PC-3 (cell line): ENCODE measurements at regions of chr22 and their contacts with region 1.

Region 1: GRCh38 chr22:37566903-37567820 is 6.9 kb downstream of the CDC42EP1 start:
- DNase-seq: peak; percentile 93
- ATAC-seq: peak; percentile 63
- H3K4me3 ChIP-seq: no peak overlapping the region
- H3K27ac ChIP-seq: peak overlapping the region; percentile 53
- H3K4me1 ChIP-seq: peaks cover 50% of the 10 kb centered on the region
- H3K27me3 ChIP-seq: no peaks in the 10 kb centered on the region
- CTCF ChIP-seq: peak; percentile 89

Region 2: GRCh38 chr22:37538590-37539357 is 28.4 kb before region 1 on chr22:
- CTCF ChIA-PET with region 1: interaction called, 8 read pairs
- POLR2A ChIA-PET with region 1: interaction called, 3 read pairs
- intact Hi-C with region 1: loop called (anchors 1 kb)
- DNase-seq: peak; percentile 89
- ATAC-seq: peak; percentile 89
- H3K4me3 ChIP-seq: peak overlapping the region; percentile 43; the same call in 1 of the 2 replicates
- H3K27ac ChIP-seq: no peak overlapping the region
- H3K4me1 ChIP-seq: peaks cover 22% of the 10 kb centered on the region
- H3K27me3 ChIP-seq: no peaks in the 10 kb centered on the region
- CTCF ChIP-seq: peak; percentile 90

Region 3: DNA sequence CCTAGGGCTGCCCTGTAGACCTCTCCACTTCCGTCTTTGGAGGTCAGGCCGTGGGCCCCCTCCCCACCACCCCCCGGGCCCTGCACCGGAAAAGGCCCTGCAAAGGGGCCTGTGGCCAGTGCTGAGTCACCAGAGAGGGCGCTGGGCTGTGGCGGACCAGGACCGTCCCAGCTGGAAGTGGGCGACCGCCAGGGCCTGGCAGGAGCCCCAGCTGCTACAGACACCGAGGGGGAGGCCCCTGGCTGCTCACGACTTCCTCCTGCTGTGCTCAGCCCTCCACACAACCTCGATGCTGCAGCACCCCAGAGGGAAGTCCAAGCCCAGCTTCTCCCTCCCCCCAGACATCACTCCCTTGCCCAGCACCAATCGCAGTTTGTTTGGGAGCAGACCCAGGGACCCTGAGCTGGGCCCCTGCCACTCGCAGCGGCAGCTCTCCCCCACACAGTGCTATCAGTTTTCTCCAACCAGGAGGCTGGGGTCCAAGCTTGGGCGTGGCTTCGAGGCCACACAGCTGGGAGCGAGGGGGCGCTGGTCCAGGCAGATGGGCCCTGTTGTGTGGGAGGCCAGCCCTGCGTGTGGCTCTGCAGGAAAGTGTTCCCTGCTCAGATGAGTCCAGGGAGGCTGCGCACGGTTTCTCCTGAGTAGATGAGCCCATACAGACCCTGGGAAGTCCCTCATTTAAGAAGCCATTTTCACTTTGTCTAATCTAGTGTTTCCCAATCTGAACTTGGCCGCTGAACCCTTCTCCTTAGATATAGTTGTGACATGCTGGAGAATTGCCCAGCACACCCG is 66.7 kb after region 1 on chr22:
- CTCF ChIA-PET with region 1: no interaction called
- POLR2A ChIA-PET with region 1: no interaction called
- intact Hi-C with region 1: no loop called
- DNase-seq: no peak
- ATAC-seq: peak; percentile 26; the same call in 1 of the 2 replicates
- H3K4me3 ChIP-seq: no peak overlapping the region
- H3K27ac ChIP-seq: no peak overlapping the region
- H3K4me1 ChIP-seq: peaks cover under 1% of the 10 kb centered on the region; the same call in 1 of the 2 replicates
- H3K27me3 ChIP-seq: no peaks in the 10 kb centered on the region
- CTCF ChIP-seq: no peak